MCF 10A (cell line): ENCODE measurements at regions of chr4 and their contacts with region 1.

Region 1: GRCh38 chr4:153127760-153128494 is 76.3 kb upstream of the TRIM2 start:
- DNase-seq: peak; percentile 86
- H3K4me3 Mint-ChIP-seq: no peak overlapping the region
- H3K27ac Mint-ChIP-seq: no peak overlapping the region
- H3K4me1 Mint-ChIP-seq: no peaks in the 10 kb centered on the region
- H3K27me3 Mint-ChIP-seq: no peaks in the 10 kb centered on the region
- CTCF ChIP-seq: peak; percentile 67

Region 2: DNA sequence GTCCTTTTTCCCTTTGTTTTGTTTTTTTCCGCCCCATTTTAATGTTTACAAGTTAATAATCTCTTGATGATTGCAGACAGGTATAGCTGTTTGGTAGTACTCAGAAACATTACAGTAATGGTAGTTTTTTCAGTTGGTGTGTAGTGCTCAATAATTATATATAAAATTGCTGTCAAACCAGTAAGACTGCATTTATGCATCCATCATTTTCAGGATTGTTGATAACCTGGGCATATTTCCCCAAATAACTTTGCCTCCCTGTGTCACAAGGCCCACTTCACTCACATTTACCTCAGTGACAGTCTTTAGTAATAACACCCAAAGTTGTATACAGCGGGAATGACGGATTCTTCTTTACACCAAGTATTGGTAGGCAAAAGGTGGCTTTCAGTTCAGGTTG is 332.0 kb before region 1 on chr4:
- CTCF ChIA-PET with region 1: no interaction called
- POLR2A ChIA-PET with region 1: no interaction called
- intact Hi-C with region 1: no loop called
- DNase-seq: no peak
- H3K4me3 Mint-ChIP-seq: no peak overlapping the region
- H3K27ac Mint-ChIP-seq: no peak overlapping the region
- H3K4me1 Mint-ChIP-seq: peaks cover 1% of the 10 kb centered on the region
- H3K27me3 Mint-ChIP-seq: no peaks in the 10 kb centered on the region
- CTCF ChIP-seq: no peak

Region 3: DNA sequence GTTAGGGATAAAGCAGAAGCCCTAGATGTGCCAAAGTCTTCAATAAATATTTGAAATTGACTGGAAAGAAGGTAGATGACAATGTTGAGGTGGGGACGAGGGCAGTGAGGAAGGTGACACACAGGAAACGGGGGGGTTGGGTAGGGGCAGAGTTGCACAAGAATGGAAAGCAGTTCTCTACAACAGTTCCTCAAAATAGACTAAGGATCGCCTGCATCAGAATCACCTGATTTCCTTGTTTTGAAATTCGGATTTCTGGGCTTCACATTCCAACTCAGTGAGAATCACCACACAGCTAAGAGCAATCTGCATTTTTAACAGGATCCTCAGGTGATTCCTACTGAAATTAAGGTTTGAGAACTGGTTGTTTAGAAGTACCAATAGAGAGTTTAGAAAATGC is 277.6 kb before region 1 on chr4:
- CTCF ChIA-PET with region 1: interaction called, 57 read pairs
- POLR2A ChIA-PET with region 1: interaction called, 9 read pairs
- intact Hi-C with region 1: loop called (anchors 1 kb)
- DNase-seq: peak; percentile 61
- H3K4me3 Mint-ChIP-seq: peak overlapping the region; percentile 67
- H3K27ac Mint-ChIP-seq: peak overlapping the region; percentile 74
- H3K4me1 Mint-ChIP-seq: peaks cover 22% of the 10 kb centered on the region
- H3K27me3 Mint-ChIP-seq: no peaks in the 10 kb centered on the region
- CTCF ChIP-seq: no peak

Region 4: DNA sequence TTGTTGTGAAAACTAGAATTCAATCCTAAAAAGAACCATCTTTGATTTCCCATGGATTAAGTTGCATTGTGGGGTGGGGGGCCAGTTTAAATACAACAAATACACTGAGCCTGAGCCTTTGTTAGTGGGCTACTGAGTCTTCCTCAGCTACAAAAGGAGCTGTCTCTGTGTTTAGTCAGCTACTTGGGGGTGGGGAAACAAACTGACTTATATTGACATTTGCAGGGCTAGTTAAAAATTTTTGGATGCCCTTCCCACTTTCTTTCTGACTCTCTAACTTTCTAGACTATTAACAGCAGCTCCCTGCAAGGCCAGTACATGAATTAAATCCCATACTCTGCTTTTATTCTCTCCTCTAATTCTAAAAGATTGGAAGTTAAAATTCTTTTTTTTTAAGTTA is 224.3 kb before region 1 on chr4:
- CTCF ChIA-PET with region 1: no interaction called
- POLR2A ChIA-PET with region 1: no interaction called
- intact Hi-C with region 1: no loop called
- DNase-seq: no peak
- H3K4me3 Mint-ChIP-seq: no peak overlapping the region
- H3K27ac Mint-ChIP-seq: no peak overlapping the region
- H3K4me1 Mint-ChIP-seq: no peaks in the 10 kb centered on the region
- H3K27me3 Mint-ChIP-seq: no peaks in the 10 kb centered on the region
- CTCF ChIP-seq: no peak

Region 5: GRCh38 chr4:152996108-152996571 is 131.8 kb before region 1 on chr4:
- CTCF ChIA-PET with region 1: interaction called, 16 read pairs
- POLR2A ChIA-PET with region 1: interaction called, 3 read pairs
- intact Hi-C with region 1: no loop called
- DNase-seq: no peak
- H3K4me3 Mint-ChIP-seq: no peak overlapping the region
- H3K27ac Mint-ChIP-seq: peak overlapping the region; percentile 9
- H3K4me1 Mint-ChIP-seq: peaks cover 18% of the 10 kb centered on the region
- H3K27me3 Mint-ChIP-seq: no peaks in the 10 kb centered on the region
- CTCF ChIP-seq: no peak

Region 6: GRCh38 chr4:153022241-153022771 is 105.6 kb before region 1 on chr4:
- CTCF ChIA-PET with region 1: no interaction called
- POLR2A ChIA-PET with region 1: no interaction called
- intact Hi-C with region 1: no loop called
- DNase-seq: no peak
- H3K4me3 Mint-ChIP-seq: no peak overlapping the region
- H3K27ac Mint-ChIP-seq: no peak overlapping the region
- H3K4me1 Mint-ChIP-seq: peaks cover 6% of the 10 kb centered on the region
- H3K27me3 Mint-ChIP-seq: no peaks in the 10 kb centered on the region
- CTCF ChIP-seq: no peak

Region 7: GRCh38 chr4:153074936-153075630 is 52.8 kb before region 1 on chr4:
- CTCF ChIA-PET with region 1: interaction called, 235 read pairs
- POLR2A ChIA-PET with region 1: interaction called, 5 read pairs
- intact Hi-C with region 1: no loop called
- DNase-seq: no peak
- H3K4me3 Mint-ChIP-seq: no peak overlapping the region
- H3K27ac Mint-ChIP-seq: no peak overlapping the region
- H3K4me1 Mint-ChIP-seq: peaks cover 8% of the 10 kb centered on the region
- H3K27me3 Mint-ChIP-seq: no peaks in the 10 kb centered on the region
- CTCF ChIP-seq: no peak

Region 8: GRCh38 chr4:153089742-153090141 is 38.2 kb before region 1 on chr4:
- CTCF ChIA-PET with region 1: interaction called, 235 read pairs
- POLR2A ChIA-PET with region 1: interaction called, 8 read pairs
- intact Hi-C with region 1: no loop called
- DNase-seq: no peak
- H3K4me3 Mint-ChIP-seq: no peak overlapping the region
- H3K27ac Mint-ChIP-seq: no peak overlapping the region
- H3K4me1 Mint-ChIP-seq: peaks cover 6% of the 10 kb centered on the region
- H3K27me3 Mint-ChIP-seq: no peaks in the 10 kb centered on the region
- CTCF ChIP-seq: no peak

Region 9: DNA sequence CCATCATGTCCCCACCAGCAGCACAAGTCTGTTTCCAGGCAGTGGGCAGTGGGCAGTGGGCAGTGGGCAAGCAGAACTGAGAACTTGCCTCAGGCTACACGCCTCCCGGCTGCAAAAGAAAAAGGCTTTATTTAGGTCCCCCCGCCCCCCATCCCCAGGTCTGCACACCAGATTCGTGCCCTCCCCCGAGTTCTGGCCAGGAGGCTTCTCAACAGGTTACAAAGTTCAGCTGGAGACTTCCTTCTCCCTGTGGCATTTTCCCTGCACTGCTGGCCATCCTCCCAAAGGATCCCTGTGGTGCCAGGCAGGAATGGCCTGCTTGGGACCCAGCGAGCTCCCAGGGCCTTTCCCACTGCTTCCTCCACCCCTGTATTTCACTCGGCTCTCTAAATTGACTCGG is 20.7 kb before region 1 on chr4:
- CTCF ChIA-PET with region 1: interaction called, 59 read pairs
- POLR2A ChIA-PET with region 1: no interaction called
- intact Hi-C with region 1: no loop called
- DNase-seq: no peak
- H3K4me3 Mint-ChIP-seq: no peak overlapping the region
- H3K27ac Mint-ChIP-seq: no peak overlapping the region
- H3K4me1 Mint-ChIP-seq: no peaks in the 10 kb centered on the region
- H3K27me3 Mint-ChIP-seq: peaks cover 33% of the 10 kb centered on the region
- CTCF ChIP-seq: no peak

Region 10: GRCh38 chr4:153785910-153786721 is 658.2 kb after region 1 on chr4:
- CTCF ChIA-PET with region 1: no interaction called
- POLR2A ChIA-PET with region 1: no interaction called
- intact Hi-C with region 1: no loop called
- DNase-seq: peak; percentile 49
- H3K4me3 Mint-ChIP-seq: no peak overlapping the region
- H3K27ac Mint-ChIP-seq: no peak overlapping the region
- H3K4me1 Mint-ChIP-seq: peaks cover 13% of the 10 kb centered on the region
- H3K27me3 Mint-ChIP-seq: no peaks in the 10 kb centered on the region
- CTCF ChIP-seq: peak; percentile 47